Dendritic cell treated with granulocyte-macrophage colony-stimulating factor and Interleukin-4, amounts not matched to agents 40 ng/mL and 50 ng/mL, for 4 days (primary cell): ENCODE measurements at regions of chr15 and their contacts with region 1.

Region 1: DNA sequence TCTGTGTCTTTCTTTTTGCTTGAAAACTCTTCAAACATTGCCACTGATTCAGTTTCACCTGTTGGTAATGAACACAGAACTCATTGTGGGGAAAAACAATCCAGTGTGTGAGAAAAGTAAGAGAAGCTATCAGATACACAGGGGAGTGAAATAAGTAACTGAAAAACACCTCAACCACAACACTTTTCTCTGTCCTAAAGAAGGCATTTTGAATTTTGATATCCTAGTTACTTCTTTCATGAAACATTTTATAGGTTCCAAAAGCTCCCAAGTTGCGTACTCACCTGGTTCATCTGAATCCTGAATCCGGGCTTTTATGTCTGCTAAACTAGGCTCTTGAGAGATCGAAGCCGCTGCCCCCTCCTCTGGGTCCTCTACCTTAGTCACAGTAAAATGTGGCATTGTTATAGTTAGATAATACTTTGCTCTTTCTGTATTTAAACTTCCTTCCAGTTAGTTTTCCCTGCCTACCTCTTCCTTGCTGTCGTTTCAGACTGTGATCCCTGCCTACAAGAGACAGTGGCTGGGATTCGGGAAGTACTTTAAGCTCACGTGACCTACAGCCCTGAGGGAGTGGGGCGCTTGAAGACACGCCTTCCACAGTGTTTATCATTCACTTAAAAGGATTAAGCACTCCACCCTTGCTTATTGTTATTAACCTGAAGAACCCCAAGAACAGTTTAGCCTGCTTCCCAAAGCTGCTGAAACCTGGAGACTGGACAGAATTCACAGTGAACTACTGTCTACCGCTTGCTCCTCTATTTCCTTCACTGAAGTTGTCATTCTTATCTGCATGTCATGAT is 19.1 kb downstream of the SLC12A6 start:
- H3K4me3 Mint-ChIP-seq: peak overlapping the region; percentile 83
- H3K27ac Mint-ChIP-seq: peak overlapping the region; percentile 90
- H3K4me1 Mint-ChIP-seq: peaks cover 21% of the 10 kb centered on the region
- H3K27me3 Mint-ChIP-seq: no peaks in the 10 kb centered on the region

Region 2: GRCh38 chr15:34284937-34285336 is 33.5 kb before region 1 on chr15:
- intact Hi-C with region 1: no loop called
- H3K4me3 Mint-ChIP-seq: no peak overlapping the region
- H3K27ac Mint-ChIP-seq: no peak overlapping the region
- H3K4me1 Mint-ChIP-seq: no peaks in the 10 kb centered on the region
- H3K27me3 Mint-ChIP-seq: no peaks in the 10 kb centered on the region

Region 3: GRCh38 chr15:34342737-34343575 is 24.5 kb after region 1 on chr15 and contains the starts of genes NOP10 and NUTM1:
- intact Hi-C with region 1: loop called (anchors 2 kb)
- H3K4me3 Mint-ChIP-seq: no peak within 1 kb of the TSS
- H3K27ac Mint-ChIP-seq: no peak within 1 kb of the TSS
- H3K4me1 Mint-ChIP-seq: peaks cover 24% of the 10 kb centered on the region
- H3K27me3 Mint-ChIP-seq: no peaks in the 10 kb centered on the region